Caco-2 (cell line): ENCODE measurements at regions of chrX and their contacts with region 1.

Region 1: DNA sequence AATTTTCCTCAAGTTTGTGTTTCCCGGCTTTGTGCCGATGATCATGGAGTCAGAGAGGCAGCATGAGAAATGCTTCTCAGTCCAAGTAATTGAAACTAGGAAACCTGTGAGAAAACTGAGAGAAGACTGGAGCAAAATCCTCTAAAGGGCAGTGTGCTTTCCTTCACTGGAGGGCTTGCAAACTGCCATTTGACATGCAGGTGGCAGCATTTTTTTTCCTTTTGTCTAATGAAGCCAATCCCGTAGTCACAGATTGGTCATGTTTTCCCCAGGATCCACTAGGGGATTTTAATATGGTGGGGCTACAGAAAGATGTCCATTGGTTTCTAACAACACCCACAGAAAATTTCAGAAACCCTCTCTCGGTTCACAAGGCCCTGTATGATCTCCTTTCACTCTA is 117.4 kb upstream of the NUDT10 start:
- DNase-seq: peak in 1 of 2 experiments; percentile 1
- H3K4me3 ChIP-seq: no peak overlapping the region
- H3K4me3 Mint-ChIP-seq: no peak overlapping the region
- H3K27ac Mint-ChIP-seq: no peak overlapping the region
- H3K4me1 ChIP-seq: no peaks in the 10 kb centered on the region
- H3K4me1 Mint-ChIP-seq: no peaks in the 10 kb centered on the region
- H3K27me3 ChIP-seq: no peaks in the 10 kb centered on the region
- H3K27me3 Mint-ChIP-seq: peaks cover 5% of the 10 kb centered on the region
- CTCF ChIP-seq: peak in 1 of 2 experiments; percentile 10

Region 2: DNA sequence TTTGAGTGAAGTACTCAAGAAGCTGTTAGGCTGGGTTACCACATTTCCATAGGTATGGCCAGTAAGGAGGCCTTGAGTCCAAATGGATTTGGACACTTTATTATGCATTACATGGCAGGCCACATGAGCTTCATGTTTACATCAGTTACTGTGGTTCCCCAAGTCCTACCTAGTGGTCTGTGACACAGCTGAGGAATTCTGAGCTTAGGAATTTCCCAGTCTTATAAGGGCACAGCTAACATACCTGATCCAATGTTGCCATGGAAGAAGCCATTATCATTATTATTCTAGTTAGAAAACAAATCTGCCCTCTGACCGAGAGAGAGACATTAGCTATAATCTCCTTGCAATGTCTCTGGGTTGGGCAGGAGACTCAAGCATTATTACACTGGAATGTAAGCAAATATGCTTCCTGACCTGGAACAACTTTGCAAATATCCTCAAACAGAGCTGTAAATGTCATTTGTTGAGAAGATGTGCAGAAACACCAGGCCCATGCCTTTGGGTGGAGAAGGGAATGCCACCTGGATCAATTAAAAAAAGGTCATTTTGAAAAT is 57.0 kb before region 1 on chrX:
- CTCF ChIA-PET with region 1: no interaction called
- POLR2A ChIA-PET with region 1: no interaction called
- intact Hi-C with region 1: no loop called
- DNase-seq: peak in 1 of 2 experiments; percentile 17
- H3K4me3 ChIP-seq: no peak overlapping the region
- H3K4me3 Mint-ChIP-seq: no peak overlapping the region
- H3K27ac Mint-ChIP-seq: peak overlapping the region; percentile 22
- H3K4me1 ChIP-seq: no peaks in the 10 kb centered on the region
- H3K4me1 Mint-ChIP-seq: no peaks in the 10 kb centered on the region
- H3K27me3 ChIP-seq: no peaks in the 10 kb centered on the region
- H3K27me3 Mint-ChIP-seq: no peaks in the 10 kb centered on the region
- CTCF ChIP-seq: no peak

Region 3: GRCh38 chrX:51420610-51421009 is 205.4 kb after region 1 on chrX:
- CTCF ChIA-PET with region 1: no interaction called
- POLR2A ChIA-PET with region 1: no interaction called
- intact Hi-C with region 1: loop called (anchors 5 kb)
- DNase-seq: peak in 1 of 2 experiments; percentile 26
- H3K4me3 ChIP-seq: no peak overlapping the region
- H3K4me3 Mint-ChIP-seq: no peak overlapping the region
- H3K27ac Mint-ChIP-seq: no peak overlapping the region
- H3K4me1 ChIP-seq: no peaks in the 10 kb centered on the region
- H3K4me1 Mint-ChIP-seq: no peaks in the 10 kb centered on the region
- H3K27me3 ChIP-seq: no peaks in the 10 kb centered on the region
- H3K27me3 Mint-ChIP-seq: no peaks in the 10 kb centered on the region
- CTCF ChIP-seq: peak; percentile 39 to 61